ENCODE measurements at regions of chr11 and their contacts with region 1.

Region 1: DNA sequence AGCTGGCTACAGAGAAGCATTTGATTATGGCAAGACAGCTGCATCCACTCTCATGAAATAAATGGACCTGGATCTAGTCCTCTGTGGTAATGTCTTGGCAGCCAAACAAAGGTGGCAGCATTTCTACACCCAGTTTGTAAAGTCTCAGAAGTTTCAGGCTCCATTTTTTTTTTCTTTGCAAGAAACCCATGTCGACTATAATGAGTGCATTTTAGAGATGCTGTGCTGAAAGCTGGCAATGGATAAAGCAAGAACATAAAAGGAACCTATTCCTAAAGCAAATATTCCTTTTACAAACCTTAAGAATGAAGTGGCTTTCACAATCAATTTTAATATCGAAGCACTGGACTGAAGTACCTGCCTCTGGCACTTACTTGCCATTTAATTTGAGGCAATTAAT is 33.5 kb downstream of the THAP12 start:
- DNase-seq: no peak
- ATAC-seq: no peak
- H3K4me3 ChIP-seq: no peak overlapping the region
- H3K27ac ChIP-seq: no peak overlapping the region
- H3K4me1 ChIP-seq: no peaks in the 10 kb centered on the region
- H3K27me3 ChIP-seq: no peaks in the 10 kb centered on the region
- CTCF ChIP-seq: peak in 1 of 3 experiments; percentile 13; a peak in 1 of 6 replicates
- EP300 ChIP-seq: no peak
- POLR2A ChIP-seq: no peak
- RAD21 ChIP-seq: no peak; the same call in 1 of the 2 replicates

Region 2: DNA sequence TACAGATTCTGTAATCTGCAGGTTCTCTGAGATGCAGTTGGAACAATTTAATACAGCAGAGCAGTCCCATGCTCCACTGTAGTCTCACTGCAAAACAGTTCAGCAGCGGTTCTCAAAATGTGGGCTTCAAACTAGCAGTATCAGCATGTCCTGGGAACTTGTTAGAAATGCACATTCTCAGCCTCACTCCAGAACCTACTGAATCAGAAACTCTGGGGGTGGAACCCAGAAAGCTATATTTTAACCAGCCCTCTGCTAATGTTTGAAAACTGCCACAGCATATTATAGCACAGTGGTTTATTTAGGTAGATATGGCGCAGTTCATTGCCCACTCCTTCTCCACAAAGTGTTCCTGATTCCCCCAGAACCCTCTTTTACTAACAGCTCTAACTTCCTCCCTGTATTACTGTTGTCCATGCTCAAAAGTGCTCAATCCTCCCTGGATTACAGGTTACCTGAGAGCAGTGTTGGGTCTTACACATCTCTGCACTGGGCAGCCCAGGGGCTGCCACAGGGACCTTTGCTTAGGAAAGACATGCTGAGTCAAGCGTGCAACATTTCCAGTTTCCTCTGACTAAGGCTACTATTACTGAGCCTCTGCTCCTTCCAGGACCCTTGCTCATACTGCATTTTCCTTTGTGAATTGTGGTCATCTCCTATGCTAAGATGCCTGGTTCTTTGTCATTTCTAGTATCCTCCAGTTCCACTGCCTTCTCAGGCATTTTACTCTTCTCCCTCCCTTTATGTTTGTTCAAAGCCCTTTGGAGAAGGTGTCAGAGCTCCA is 586.6 kb before region 1 on chr11:
- CTCF ChIA-PET with region 1: no interaction called
- POLR2A ChIA-PET with region 1: no interaction called
- RAD21 ChIA-PET with region 1: no interaction called
- SMC1A ChIA-PET with region 1: no interaction called
- in situ Hi-C with region 1: no loop called
- intact Hi-C with region 1: no loop called
- DNase-seq: no peak
- ATAC-seq: no peak; the same call in 2 of the 3 replicates
- H3K4me3 ChIP-seq: no peak overlapping the region
- H3K27ac ChIP-seq: no peak overlapping the region
- H3K4me1 ChIP-seq: peaks cover under 1% of the 10 kb centered on the region
- H3K27me3 ChIP-seq: no peaks in the 10 kb centered on the region
- CTCF ChIP-seq: no peak
- EP300 ChIP-seq: no peak
- POLR2A ChIP-seq: no peak
- RAD21 ChIP-seq: no peak

Region 3: GRCh38 chr11:76512851-76513653 is 165.6 kb after region 1 on chr11:
- CTCF ChIA-PET with region 1: no interaction called
- POLR2A ChIA-PET with region 1: no interaction called
- RAD21 ChIA-PET with region 1: no interaction called
- SMC1A ChIA-PET with region 1: no interaction called
- in situ Hi-C with region 1: no loop called
- intact Hi-C with region 1: loop called (anchors 10 kb)
- DNase-seq: no peak
- ATAC-seq: no peak
- H3K4me3 ChIP-seq: no peak overlapping the region
- H3K27ac ChIP-seq: no peak overlapping the region
- H3K4me1 ChIP-seq: no peaks in the 10 kb centered on the region
- H3K27me3 ChIP-seq: no peaks in the 10 kb centered on the region
- CTCF ChIP-seq: peak in 2 of 3 experiments; percentile 7 to 24; a peak in 2 of 6 replicates
- EP300 ChIP-seq: no peak
- POLR2A ChIP-seq: no peak
- RAD21 ChIP-seq: peak; percentile 54

Measured in GM12878 (cell line).